WTC11 (cell line): ENCODE measurements at regions of chr14 and their contacts with region 1.

Region 1: GRCh38 chr14:33676135-33676566 is 274.7 kb downstream of the EGLN3 start:
- DNase-seq: peak; percentile 77
- ATAC-seq: peak; percentile 97
- H3K4me3 Mint-ChIP-seq: peak overlapping the region; percentile 25; the same call in 1 of the 2 replicates
- H3K27ac Mint-ChIP-seq: no peak overlapping the region
- H3K4me1 Mint-ChIP-seq: peaks cover 36% of the 10 kb centered on the region
- H3K27me3 Mint-ChIP-seq: no peaks in the 10 kb centered on the region
- CTCF ChIP-seq: no peak

Region 2: DNA sequence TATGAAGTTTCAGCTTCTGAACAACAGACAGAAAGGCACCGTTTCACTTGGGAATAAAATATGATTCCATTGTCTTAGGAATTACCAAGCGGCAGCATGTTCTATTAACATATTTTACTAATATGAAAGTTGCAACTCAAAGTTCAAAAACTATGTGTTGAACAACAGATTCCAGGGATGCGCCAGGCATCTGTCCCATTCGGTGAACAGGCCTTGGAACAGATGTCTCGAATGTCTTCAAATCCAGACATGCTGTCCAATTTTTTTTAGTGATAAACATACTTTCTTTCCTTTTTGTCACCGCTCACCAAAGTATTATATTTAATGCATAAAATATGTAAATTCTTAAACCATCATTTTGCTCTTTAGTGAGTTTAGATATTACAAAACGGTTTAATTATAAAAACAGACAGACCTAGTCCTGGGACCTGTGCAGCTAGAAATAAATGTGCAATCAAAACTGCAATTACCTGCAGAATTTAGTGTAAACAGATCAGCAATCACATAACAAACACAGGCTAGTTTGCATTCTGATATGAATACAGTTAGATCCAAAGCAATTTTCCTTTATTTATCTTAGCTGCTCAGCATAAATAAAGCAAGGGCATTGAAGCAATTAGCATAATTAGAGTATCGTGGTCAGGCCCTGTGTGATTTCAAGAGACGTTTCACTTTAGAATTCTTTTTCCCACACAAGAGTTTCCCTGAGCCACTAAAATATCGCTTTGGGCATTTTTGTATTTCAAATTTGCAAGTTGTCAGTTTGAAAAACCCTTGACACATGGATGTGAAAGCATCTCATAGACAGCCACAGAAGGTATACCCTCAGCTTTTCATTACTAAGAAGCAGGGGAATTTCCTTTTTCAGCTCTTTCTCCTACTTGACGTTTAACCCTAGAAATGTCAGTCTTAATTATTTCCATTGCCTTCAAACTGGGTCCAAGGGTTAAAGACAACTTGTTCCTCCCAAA is 146.1 kb before region 1 on chr14:
- CTCF ChIA-PET with region 1: no interaction called
- POLR2A ChIA-PET with region 1: no interaction called
- DNase-seq: no peak
- ATAC-seq: no peak
- H3K4me3 Mint-ChIP-seq: no peak overlapping the region
- H3K27ac Mint-ChIP-seq: no peak overlapping the region
- H3K4me1 Mint-ChIP-seq: peaks cover 15% of the 10 kb centered on the region
- H3K27me3 Mint-ChIP-seq: no peaks in the 10 kb centered on the region
- CTCF ChIP-seq: no peak

Region 3: GRCh38 chr14:33696165-33696564 is 20.0 kb after region 1 on chr14:
- CTCF ChIA-PET with region 1: interaction called, 10 read pairs
- POLR2A ChIA-PET with region 1: no interaction called
- DNase-seq: no peak
- ATAC-seq: no peak
- H3K4me3 Mint-ChIP-seq: no peak overlapping the region
- H3K27ac Mint-ChIP-seq: no peak overlapping the region
- H3K4me1 Mint-ChIP-seq: no peaks in the 10 kb centered on the region
- H3K27me3 Mint-ChIP-seq: no peaks in the 10 kb centered on the region
- CTCF ChIP-seq: no peak

Region 4: DNA sequence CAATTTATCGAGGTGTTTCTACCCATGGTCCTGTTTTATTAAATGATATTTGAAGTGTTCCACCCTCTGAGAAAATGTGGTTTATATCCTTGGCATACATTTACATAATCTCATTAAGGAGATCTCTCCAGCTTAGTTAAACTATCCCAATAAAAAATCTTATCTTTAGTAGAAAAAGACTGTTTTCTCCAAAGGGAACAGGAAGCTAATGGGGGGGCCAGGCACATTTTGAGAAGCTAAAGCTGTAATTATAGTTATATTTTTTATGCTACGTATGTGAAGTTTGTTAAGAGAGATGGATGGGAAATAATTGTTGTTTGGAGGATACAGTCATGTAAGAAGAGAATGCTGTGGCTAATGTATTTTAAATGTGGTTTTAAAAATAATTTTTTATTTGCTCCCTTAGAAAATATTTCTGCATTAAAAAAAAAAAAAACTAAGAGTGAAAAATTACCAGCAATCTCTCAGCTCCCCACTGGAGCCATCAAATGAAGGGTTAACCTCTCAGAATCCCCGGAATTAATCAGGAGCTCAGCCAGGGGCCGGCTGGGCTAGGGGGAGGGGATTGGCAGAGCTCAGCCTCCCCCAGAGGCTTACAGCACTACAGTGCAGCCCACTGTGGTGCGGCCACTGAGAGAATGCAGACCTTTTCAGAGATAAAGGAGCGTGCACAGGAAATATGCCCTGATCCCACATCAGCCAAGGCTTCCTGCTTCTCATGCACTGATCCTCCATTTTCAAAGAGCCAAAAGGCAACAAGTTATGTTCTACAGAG is 88.9 kb after region 1 on chr14:
- CTCF ChIA-PET with region 1: interaction called, 12 read pairs
- POLR2A ChIA-PET with region 1: no interaction called
- DNase-seq: peak; percentile 65
- ATAC-seq: peak; percentile 99
- H3K4me3 Mint-ChIP-seq: peak overlapping the region; percentile 34
- H3K27ac Mint-ChIP-seq: no peak overlapping the region
- H3K4me1 Mint-ChIP-seq: peaks cover 57% of the 10 kb centered on the region
- H3K27me3 Mint-ChIP-seq: no peaks in the 10 kb centered on the region
- CTCF ChIP-seq: no peak

Region 5: GRCh38 chr14:33792720-33793368 is 116.7 kb after region 1 on chr14:
- CTCF ChIA-PET with region 1: interaction called, 34 read pairs
- POLR2A ChIA-PET with region 1: no interaction called
- DNase-seq: peak; percentile 88
- ATAC-seq: peak; percentile 78
- H3K4me3 Mint-ChIP-seq: no peak overlapping the region
- H3K27ac Mint-ChIP-seq: no peak overlapping the region
- H3K4me1 Mint-ChIP-seq: peaks cover 25% of the 10 kb centered on the region
- H3K27me3 Mint-ChIP-seq: no peaks in the 10 kb centered on the region
- CTCF ChIP-seq: peak; percentile 90